Stomach (tissue), 19 donors: ENCODE measurements at regions of chr9 and their contacts with region 1.

Region 1: DNA sequence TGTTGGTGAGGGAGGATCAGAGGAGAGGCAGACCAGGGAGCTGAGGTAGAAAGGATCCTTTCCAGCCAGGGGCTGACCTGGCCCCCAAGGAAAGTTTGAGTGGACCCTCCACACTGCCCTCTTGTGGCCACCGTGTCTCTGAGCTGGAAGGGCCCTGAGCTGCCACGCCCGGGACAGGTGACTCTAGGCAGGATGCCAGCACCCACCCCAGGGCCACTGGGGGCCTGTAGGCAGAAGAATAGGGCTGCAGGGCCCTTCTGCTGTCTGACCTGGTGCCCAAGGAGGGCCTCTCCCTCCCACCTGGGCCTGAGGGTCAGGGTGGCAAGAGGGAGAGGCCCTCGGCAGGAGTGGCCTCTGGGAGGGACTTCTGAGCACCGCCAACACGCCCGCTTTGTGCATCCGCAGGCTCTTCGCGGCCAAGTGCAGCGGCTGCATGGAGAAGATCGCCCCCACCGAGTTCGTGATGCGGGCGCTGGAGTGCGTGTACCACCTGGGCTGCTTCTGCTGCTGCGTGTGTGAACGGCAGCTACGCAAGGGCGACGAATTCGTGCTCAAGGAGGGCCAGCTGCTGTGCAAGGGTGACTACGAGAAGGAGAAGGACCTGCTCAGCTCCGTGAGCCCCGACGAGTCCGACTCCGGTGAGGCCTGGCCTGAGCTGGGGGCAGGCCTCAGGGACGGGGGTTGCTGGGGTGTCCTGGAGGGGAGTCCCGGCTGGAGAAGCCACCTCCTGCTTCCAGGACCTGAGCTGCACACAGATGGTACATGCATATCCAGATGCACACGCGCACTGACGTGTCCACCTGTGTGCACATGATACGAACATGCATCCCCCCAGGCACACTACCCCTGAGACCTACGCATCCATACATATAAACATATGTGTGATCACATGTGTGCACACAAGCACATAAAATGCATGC is 77.0 kb downstream of the LMX1B start:
- DNase-seq: peak; percentile 73 to 75
- H3K4me3 ChIP-seq: no peak overlapping the region
- H3K27ac ChIP-seq: no peak overlapping the region
- H3K4me1 ChIP-seq: no peaks in the 10 kb centered on the region
- H3K27me3 ChIP-seq: peaks cover 0 to 82% (median 31%) of the 10 kb centered on the region in 3 donors
- CTCF ChIP-seq: peak in 5 of 7 experiments; percentile 44 to 69 (median 65)
- EP300 ChIP-seq: no peak
- POLR2A ChIP-seq: no peak

Region 2: DNA sequence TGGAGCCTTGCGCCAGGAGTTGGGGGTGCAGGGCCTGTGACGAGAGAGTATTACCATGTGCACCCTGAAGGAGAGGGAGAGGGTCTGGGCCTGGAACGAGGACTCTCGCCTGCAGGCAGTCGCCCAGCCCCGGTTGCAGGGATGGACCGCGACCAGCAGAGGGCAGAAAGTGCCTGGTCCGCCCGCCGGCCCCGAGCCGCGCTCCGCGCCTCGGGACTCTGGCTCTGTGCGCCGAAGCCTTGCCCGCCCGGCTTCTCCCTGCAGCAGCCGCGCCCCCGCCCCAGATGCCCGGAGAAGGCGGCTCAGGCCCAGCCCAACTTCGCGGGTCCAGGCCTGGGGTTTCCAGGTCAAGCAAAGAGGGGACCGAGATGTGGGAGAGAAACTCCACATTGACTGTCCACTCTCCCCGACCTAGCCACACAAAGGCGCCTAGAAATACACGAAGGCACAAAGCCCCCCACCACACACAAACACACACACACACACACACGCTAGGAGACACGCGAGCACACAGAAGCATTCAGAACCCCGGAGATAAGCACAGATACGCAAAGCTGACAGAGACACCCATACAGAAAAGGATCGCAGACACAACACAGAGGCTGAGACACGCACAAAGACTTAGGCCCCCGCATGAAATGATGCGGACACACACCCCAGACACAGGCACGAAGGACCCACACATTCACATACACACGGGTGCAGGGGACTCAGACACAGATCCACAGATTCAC is 78.9 kb before region 1 on chr9:
- intact Hi-C with region 1: loop called (anchors 5 kb)
- DNase-seq: peak; percentile 81 to 90
- H3K4me3 ChIP-seq: peak overlapping the region; percentile 27 to 49 (median 32)
- H3K27ac ChIP-seq: no peak overlapping the region
- H3K4me1 ChIP-seq: peaks cover 39 to 56% (median 52%) of the 10 kb centered on the region in 4 donors
- H3K27me3 ChIP-seq: peaks cover 31 to 99% (median 74%) of the 10 kb centered on the region in 3 donors
- CTCF ChIP-seq: peak in 5 of 7 experiments; percentile 71 to 91 (median 73)
- EP300 ChIP-seq: no peak
- POLR2A ChIP-seq: no peak